Activated CD4-positive, alpha-beta memory T cell treated with anti-CD3 and anti-CD28 coated beads for 36 hours (primary cell): ENCODE measurements at regions of chr1 and their contacts with region 1.

Region 1: GRCh38 chr1:61077676-61078541 is 4.5 kb upstream of the NFIA start:
- DNase-seq: peak; percentile 93
- H3K4me3 Mint-ChIP-seq: peak overlapping the region; percentile 89
- H3K27ac Mint-ChIP-seq: peak overlapping the region; percentile 86
- H3K4me1 Mint-ChIP-seq: peaks cover 44% of the 10 kb centered on the region
- H3K27me3 Mint-ChIP-seq: peaks cover 5% of the 10 kb centered on the region

Region 2: GRCh38 chr1:61056573-61057439 is 21.1 kb before region 1 on chr1:
- CTCF ChIA-PET with region 1: interaction called, 64 read pairs
- POLR2A ChIA-PET with region 1: interaction called, 31 read pairs
- intact Hi-C with region 1: loop called (anchors 1 kb)
- DNase-seq: peak; percentile 58
- H3K4me3 Mint-ChIP-seq: peak overlapping the region; percentile 81
- H3K27ac Mint-ChIP-seq: no peak overlapping the region
- H3K4me1 Mint-ChIP-seq: peaks cover 23% of the 10 kb centered on the region
- H3K27me3 Mint-ChIP-seq: peaks cover 54% of the 10 kb centered on the region

Region 3: GRCh38 chr1:61301824-61302657 is 224.1 kb after region 1 on chr1:
- CTCF ChIA-PET with region 1: no interaction called
- POLR2A ChIA-PET with region 1: interaction called, 12 read pairs
- intact Hi-C with region 1: loop called (anchors 1 kb)
- DNase-seq: peak; percentile 51
- H3K4me3 Mint-ChIP-seq: peak overlapping the region; percentile 1
- H3K27ac Mint-ChIP-seq: peak overlapping the region; percentile 89
- H3K4me1 Mint-ChIP-seq: peaks cover 35% of the 10 kb centered on the region
- H3K27me3 Mint-ChIP-seq: peaks cover 5% of the 10 kb centered on the region

Region 4: GRCh38 chr1:61332196-61332753 is 254.4 kb after region 1 on chr1:
- CTCF ChIA-PET with region 1: interaction called, 5 read pairs
- POLR2A ChIA-PET with region 1: interaction called, 11 read pairs
- intact Hi-C with region 1: loop called (anchors 1 kb)
- DNase-seq: peak; percentile 30
- H3K4me3 Mint-ChIP-seq: no peak overlapping the region
- H3K27ac Mint-ChIP-seq: peak overlapping the region; percentile 67
- H3K4me1 Mint-ChIP-seq: peaks cover 24% of the 10 kb centered on the region
- H3K27me3 Mint-ChIP-seq: peaks cover 2% of the 10 kb centered on the region